ENCODE measurements at regions of chrX and their contacts with region 1.

Region 1: DNA sequence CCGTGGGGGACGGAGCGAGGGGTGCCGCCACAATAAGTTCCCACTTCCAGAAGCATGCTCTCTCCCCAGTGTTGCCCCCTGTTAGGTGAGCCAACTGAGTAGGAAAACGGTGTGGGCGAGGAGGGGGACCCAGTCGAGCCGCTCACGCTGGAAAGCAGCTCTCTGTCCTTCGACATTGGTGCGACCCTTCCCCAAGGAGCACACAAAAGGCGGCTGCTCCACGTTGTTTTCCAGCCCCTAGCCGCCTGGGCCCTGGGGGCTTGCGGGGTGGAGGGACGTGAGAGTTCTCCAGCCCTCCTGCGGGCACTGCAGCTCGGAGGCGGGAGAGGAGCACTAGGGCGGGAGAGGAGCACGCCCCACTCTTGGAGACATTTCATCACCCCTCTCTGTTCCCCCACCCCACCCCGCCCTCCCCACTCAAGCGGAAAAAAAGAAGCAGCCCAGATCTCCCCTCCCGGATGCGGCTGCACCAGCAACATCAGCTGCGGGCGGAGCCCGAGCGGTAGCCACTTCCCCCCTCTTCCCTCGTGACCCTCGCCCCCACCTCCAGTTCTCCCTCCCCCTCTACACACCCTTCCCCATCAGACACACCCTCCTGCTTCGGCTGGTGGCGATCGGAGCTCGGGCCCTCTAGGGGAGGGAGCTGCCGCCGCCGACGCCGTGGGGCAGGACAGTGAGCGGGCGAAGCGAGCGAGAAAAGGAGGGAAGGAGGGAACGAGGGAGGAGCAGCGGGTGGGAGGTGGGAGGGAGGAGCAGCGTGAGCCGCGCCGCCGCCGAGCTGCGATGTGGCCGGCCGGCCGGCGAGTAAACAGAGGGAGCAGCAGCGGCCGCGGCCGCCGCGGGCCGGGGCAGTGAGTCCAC is at the start of gene DOCK11:
- DNase-seq: peak; percentile 90
- ATAC-seq: peak; percentile 81
- H3K4me3 ChIP-seq: peak within 1 kb of the TSS; percentile 69 to 78 (median 72)
- H3K4me3 Mint-ChIP-seq: peak within 1 kb of the TSS; percentile 98
- H3K27ac ChIP-seq: peak within 1 kb of the TSS; percentile 93
- H3K27ac Mint-ChIP-seq: peak within 1 kb of the TSS; percentile 99
- H3K4me1 ChIP-seq: peaks cover 16 to 35% of the 10 kb centered on the region in 2 donors
- H3K4me1 Mint-ChIP-seq: peaks cover 26% of the 10 kb centered on the region
- H3K27me3 ChIP-seq: no peaks in the 10 kb centered on the region
- H3K27me3 Mint-ChIP-seq: no peaks in the 10 kb centered on the region
- CTCF ChIP-seq: no peak
- total RNA-seq, gene DOCK11: 83.2 and 83.5 TPM in 2 replicates

Region 2: DNA sequence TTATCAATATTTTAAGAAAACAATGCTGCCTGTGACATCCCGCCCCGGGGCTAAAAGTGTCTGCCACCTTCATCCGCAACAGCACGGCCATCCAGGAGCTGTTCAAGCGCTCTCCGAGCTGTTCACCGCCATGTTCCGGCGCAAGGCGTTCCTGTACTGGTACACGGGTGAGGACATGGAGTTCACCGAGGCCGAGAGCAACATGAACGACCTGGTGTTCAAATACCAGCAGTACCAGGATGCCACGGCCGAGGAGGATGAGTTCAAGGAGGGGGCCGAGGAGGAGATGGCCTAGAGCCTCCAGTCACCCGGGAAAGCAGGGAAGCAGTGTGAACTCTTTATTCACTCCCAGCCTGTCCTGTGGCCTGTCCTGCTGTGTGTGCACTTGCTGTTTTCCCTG is 366.6 kb before region 1 on chrX:
- CTCF ChIA-PET with region 1: no interaction called
- POLR2A ChIA-PET with region 1: no interaction called
- intact Hi-C with region 1: no loop called
- DNase-seq: no peak
- ATAC-seq: no peak
- H3K4me3 ChIP-seq: no peak overlapping the region
- H3K4me3 Mint-ChIP-seq: no peak overlapping the region
- H3K27ac ChIP-seq: no peak overlapping the region
- H3K27ac Mint-ChIP-seq: no peak overlapping the region
- H3K4me1 ChIP-seq: no peaks in the 10 kb centered on the region
- H3K4me1 Mint-ChIP-seq: no peaks in the 10 kb centered on the region
- H3K27me3 ChIP-seq: no peaks in the 10 kb centered on the region
- H3K27me3 Mint-ChIP-seq: peaks cover 4% of the 10 kb centered on the region
- CTCF ChIP-seq: no peak

Region 3: DNA sequence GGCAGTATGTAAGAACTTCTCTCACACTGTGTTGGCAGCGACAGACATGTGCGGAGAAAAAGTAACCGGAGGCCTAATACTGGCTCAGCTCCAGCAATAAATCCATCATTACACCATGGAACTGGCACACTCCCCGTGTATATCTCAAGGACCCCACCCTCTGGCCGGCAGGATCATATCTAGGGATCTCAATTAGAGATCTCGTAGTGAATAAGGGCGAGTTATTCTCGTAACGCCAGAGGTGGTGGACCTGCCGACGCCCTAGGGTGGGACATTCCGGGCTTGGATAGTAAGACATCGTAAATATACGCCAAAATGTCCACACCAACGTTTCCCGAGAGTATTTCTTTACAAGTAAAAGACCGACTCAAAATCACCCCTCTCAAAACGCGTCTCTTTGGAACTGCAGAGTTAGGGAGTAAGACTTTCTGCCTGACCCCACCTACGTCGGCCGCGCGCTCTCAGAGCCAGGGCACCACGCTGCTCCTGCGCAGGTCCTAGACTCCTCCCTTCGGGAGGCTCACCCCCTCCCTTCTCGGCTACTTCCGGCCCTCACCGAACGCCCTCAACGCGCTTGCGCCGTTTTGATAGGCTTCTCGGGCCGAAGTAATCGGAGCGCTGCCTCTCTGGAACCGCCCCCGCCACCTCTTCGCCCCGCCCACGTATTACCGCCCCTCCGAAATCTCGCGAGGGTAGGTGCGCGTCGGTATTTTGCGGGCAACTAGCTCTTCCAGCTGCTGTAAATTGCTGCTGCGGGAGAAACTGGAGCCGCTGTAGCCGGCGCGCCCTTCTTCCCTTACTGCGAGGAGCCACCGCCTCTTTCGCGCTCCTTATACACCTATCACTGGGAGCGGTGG is 149.7 kb before region 1 on chrX and contains the start of gene WDR44:
- CTCF ChIA-PET with region 1: no interaction called
- POLR2A ChIA-PET with region 1: no interaction called
- intact Hi-C with region 1: loop called (anchors 5 kb)
- DNase-seq: peak; percentile 95
- ATAC-seq: peak; percentile 89
- H3K4me3 ChIP-seq: peak within 1 kb of the TSS; percentile 73 to 86 (median 78)
- H3K4me3 Mint-ChIP-seq: peak within 1 kb of the TSS; percentile 98
- H3K27ac ChIP-seq: peak within 1 kb of the TSS; percentile 88 to 89
- H3K27ac Mint-ChIP-seq: peak within 1 kb of the TSS; percentile 98
- H3K4me1 ChIP-seq: peaks cover 28 to 35% of the 10 kb centered on the region in 2 donors
- H3K4me1 Mint-ChIP-seq: peaks cover 33% of the 10 kb centered on the region
- H3K27me3 ChIP-seq: no peaks in the 10 kb centered on the region
- H3K27me3 Mint-ChIP-seq: no peaks in the 10 kb centered on the region
- CTCF ChIP-seq: no peak
- total RNA-seq, gene WDR44: 20.8 and 24.4 TPM in 2 replicates

Region 4: DNA sequence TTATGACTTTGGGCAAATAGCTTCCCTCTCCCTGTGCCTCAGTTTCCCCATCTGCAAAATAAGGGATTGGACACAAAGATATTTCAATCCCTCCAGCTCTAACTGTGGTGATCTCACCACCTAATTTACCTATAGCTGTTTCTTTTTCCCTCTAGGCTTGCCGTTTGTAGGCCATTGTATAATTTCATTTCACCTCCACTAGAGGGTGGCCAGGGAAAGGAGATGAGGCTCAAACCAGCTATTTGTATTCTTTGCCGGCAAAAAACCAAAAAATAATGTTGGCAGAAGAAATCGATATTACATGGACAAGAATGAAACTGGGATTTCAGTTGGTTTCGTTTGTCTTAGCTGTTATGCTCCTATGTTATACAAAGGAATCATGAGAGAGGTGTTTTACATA is 35.8 kb before region 1 on chrX:
- CTCF ChIA-PET with region 1: no interaction called
- POLR2A ChIA-PET with region 1: no interaction called
- intact Hi-C with region 1: no loop called
- DNase-seq: peak; percentile 50
- ATAC-seq: no peak
- H3K4me3 ChIP-seq: no peak overlapping the region
- H3K4me3 Mint-ChIP-seq: no peak overlapping the region
- H3K27ac ChIP-seq: no peak overlapping the region
- H3K27ac Mint-ChIP-seq: no peak overlapping the region
- H3K4me1 ChIP-seq: no peaks in the 10 kb centered on the region
- H3K4me1 Mint-ChIP-seq: no peaks in the 10 kb centered on the region
- H3K27me3 ChIP-seq: no peaks in the 10 kb centered on the region
- H3K27me3 Mint-ChIP-seq: peaks cover 3% of the 10 kb centered on the region
- CTCF ChIP-seq: peak; percentile 64

Region 5: GRCh38 chrX:118508635-118509034 is 13.3 kb after region 1 on chrX:
- CTCF ChIA-PET with region 1: no interaction called
- POLR2A ChIA-PET with region 1: interaction called, 11 read pairs
- intact Hi-C with region 1: no loop called
- DNase-seq: no peak
- ATAC-seq: no peak
- H3K4me3 ChIP-seq: no peak overlapping the region
- H3K4me3 Mint-ChIP-seq: no peak overlapping the region
- H3K27ac ChIP-seq: peak overlapping the region in 1 of 2 donors; percentile 5
- H3K27ac Mint-ChIP-seq: peak overlapping the region; percentile 26
- H3K4me1 ChIP-seq: peaks cover 7 to 41% of the 10 kb centered on the region in 2 donors
- H3K4me1 Mint-ChIP-seq: peaks cover 66% of the 10 kb centered on the region
- H3K27me3 ChIP-seq: no peaks in the 10 kb centered on the region
- H3K27me3 Mint-ChIP-seq: no peaks in the 10 kb centered on the region
- CTCF ChIP-seq: no peak

Region 6: GRCh38 chrX:118528071-118528737 is 32.9 kb after region 1 on chrX:
- CTCF ChIA-PET with region 1: interaction called, 5 read pairs
- POLR2A ChIA-PET with region 1: interaction called, 6 read pairs
- intact Hi-C with region 1: loop called (anchors 1 kb)
- DNase-seq: peak; percentile 68
- ATAC-seq: peak; percentile 64
- H3K4me3 ChIP-seq: peak overlapping the region; percentile 19 to 68 (median 52)
- H3K4me3 Mint-ChIP-seq: peak overlapping the region; percentile 91
- H3K27ac ChIP-seq: peak overlapping the region; percentile 78 to 87
- H3K27ac Mint-ChIP-seq: peak overlapping the region; percentile 95
- H3K4me1 ChIP-seq: peaks cover 60 to 67% of the 10 kb centered on the region in 2 donors
- H3K4me1 Mint-ChIP-seq: peaks cover 70% of the 10 kb centered on the region
- H3K27me3 ChIP-seq: no peaks in the 10 kb centered on the region
- H3K27me3 Mint-ChIP-seq: no peaks in the 10 kb centered on the region
- CTCF ChIP-seq: no peak

Region 7: GRCh38 chrX:118536687-118537461 is 41.6 kb after region 1 on chrX:
- CTCF ChIA-PET with region 1: interaction called, 11 read pairs
- POLR2A ChIA-PET with region 1: interaction called, 11 read pairs
- intact Hi-C with region 1: loop called (anchors 2 kb)
- DNase-seq: peak; percentile 64
- ATAC-seq: peak; percentile 78
- H3K4me3 ChIP-seq: peak overlapping the region in 1 of 5 experiments; percentile 24
- H3K4me3 Mint-ChIP-seq: peak overlapping the region; percentile 55
- H3K27ac ChIP-seq: peak overlapping the region; percentile 46 to 75
- H3K27ac Mint-ChIP-seq: peak overlapping the region; percentile 75
- H3K4me1 ChIP-seq: peaks cover 44 to 52% of the 10 kb centered on the region in 2 donors
- H3K4me1 Mint-ChIP-seq: peaks cover 62% of the 10 kb centered on the region
- H3K27me3 ChIP-seq: no peaks in the 10 kb centered on the region
- H3K27me3 Mint-ChIP-seq: no peaks in the 10 kb centered on the region
- CTCF ChIP-seq: peak; percentile 58

Region 8: GRCh38 chrX:118603981-118604380 is 108.7 kb after region 1 on chrX:
- CTCF ChIA-PET with region 1: interaction called, 6 read pairs
- POLR2A ChIA-PET with region 1: interaction called, 3 read pairs
- intact Hi-C with region 1: loop called (anchors 10 kb)
- DNase-seq: peak; percentile 61
- ATAC-seq: peak; percentile 51
- H3K4me3 ChIP-seq: no peak overlapping the region
- H3K4me3 Mint-ChIP-seq: no peak overlapping the region
- H3K27ac ChIP-seq: no peak overlapping the region
- H3K27ac Mint-ChIP-seq: peak overlapping the region; percentile 75
- H3K4me1 ChIP-seq: no peaks in the 10 kb centered on the region
- H3K4me1 Mint-ChIP-seq: peaks cover 4% of the 10 kb centered on the region
- H3K27me3 ChIP-seq: no peaks in the 10 kb centered on the region
- H3K27me3 Mint-ChIP-seq: no peaks in the 10 kb centered on the region
- CTCF ChIP-seq: peak; percentile 75